HepG2 (cell line): ENCODE measurements at regions of chr20 and their contacts with region 1.

Region 1: GRCh38 chr20:18428490-18429173 is 38.2 kb downstream of the DZANK1 start:
- DNase-seq: peak; percentile 64
- ATAC-seq: peak; percentile 75
- H3K4me3 ChIP-seq: no peak overlapping the region
- H3K27ac ChIP-seq: no peak overlapping the region
- H3K4me1 ChIP-seq: peaks cover 10% of the 10 kb centered on the region
- H3K27me3 ChIP-seq: no peaks in the 10 kb centered on the region
- CTCF ChIP-seq: no peak
- EP300 ChIP-seq: no peak
- POLR2A ChIP-seq: no peak
- RAD21 ChIP-seq: no peak

Region 2: GRCh38 chr20:18397030-18397429 is 31.6 kb before region 1 on chr20:
- CTCF ChIA-PET with region 1: no interaction called
- POLR2A ChIA-PET with region 1: no interaction called
- in situ Hi-C with region 1: no loop called
- intact Hi-C with region 1: no loop called
- DNase-seq: no peak
- ATAC-seq: no peak
- H3K4me3 ChIP-seq: no peak overlapping the region
- H3K27ac ChIP-seq: no peak overlapping the region
- H3K4me1 ChIP-seq: no peaks in the 10 kb centered on the region
- H3K27me3 ChIP-seq: no peaks in the 10 kb centered on the region
- CTCF ChIP-seq: no peak
- EP300 ChIP-seq: no peak
- POLR2A ChIP-seq: no peak
- RAD21 ChIP-seq: no peak

Region 3: GRCh38 chr20:18412221-18412901 is 16.3 kb before region 1 on chr20:
- CTCF ChIA-PET with region 1: no interaction called
- POLR2A ChIA-PET with region 1: no interaction called
- in situ Hi-C with region 1: no loop called
- intact Hi-C with region 1: loop called (anchors 1 kb)
- DNase-seq: no peak
- ATAC-seq: no peak
- H3K4me3 ChIP-seq: no peak overlapping the region
- H3K27ac ChIP-seq: no peak overlapping the region
- H3K4me1 ChIP-seq: peaks cover 13% of the 10 kb centered on the region
- H3K27me3 ChIP-seq: no peaks in the 10 kb centered on the region
- CTCF ChIP-seq: no peak
- EP300 ChIP-seq: no peak
- POLR2A ChIP-seq: no peak
- RAD21 ChIP-seq: no peak

Region 4: DNA sequence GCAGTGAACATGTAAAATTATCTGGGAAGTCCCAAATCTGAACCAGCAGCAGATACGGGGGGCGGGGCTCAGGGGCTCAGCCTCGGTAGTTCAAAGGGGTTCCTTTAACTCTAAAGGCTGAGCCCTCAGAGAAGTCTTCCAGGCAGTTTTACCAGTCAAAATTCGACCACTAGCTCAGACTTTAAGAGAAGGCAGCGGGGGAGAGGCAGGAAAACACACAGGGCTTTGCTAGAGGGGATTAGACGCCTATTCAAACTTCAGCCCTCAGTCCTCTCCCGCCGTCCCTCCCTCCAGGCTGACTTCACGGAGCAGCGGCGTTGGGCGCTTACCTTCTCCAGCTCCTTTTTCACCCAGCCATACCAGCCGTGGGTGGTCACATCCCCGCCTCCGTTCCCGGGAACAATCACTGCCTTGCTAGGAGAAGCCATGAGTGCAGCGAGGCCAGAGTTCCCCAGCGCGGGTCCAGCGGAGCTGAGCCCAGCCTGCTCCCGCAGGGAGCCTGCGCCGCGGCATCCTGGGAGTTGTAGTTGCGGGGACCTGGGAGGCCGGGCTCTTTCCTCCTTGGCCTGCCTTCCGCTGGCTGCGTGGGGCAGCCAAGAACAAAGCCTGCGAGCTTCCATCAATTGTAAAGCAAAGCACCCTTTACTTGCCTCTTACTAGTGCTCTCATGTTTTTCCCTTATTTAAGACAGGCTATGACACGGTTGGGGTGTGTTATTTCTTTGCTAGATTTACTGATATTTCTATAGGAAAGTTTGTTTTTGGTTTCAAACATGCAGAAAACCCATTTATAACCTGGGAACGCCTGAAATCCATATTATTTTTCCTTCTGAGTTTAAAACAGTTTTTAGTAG is 68.3 kb after region 1 on chr20 and contains the start of gene RBBP9:
- CTCF ChIA-PET with region 1: no interaction called
- POLR2A ChIA-PET with region 1: no interaction called
- in situ Hi-C with region 1: no loop called
- intact Hi-C with region 1: loop called (anchors 2 kb)
- DNase-seq: peak; percentile 84
- ATAC-seq: peak; percentile 100
- H3K4me3 ChIP-seq: peak within 1 kb of the TSS; percentile 91 to 99 (median 92)
- H3K27ac ChIP-seq: peak within 1 kb of the TSS; percentile 73
- H3K4me1 ChIP-seq: peaks cover 32% of the 10 kb centered on the region
- H3K27me3 ChIP-seq: no peaks in the 10 kb centered on the region; a peak in 1 of 5 replicates
- CTCF ChIP-seq: peak; percentile 29; the same call in 1 of the 2 replicates
- EP300 ChIP-seq: peak; percentile 31 to 35; a peak in 1 of 4 replicates
- POLR2A ChIP-seq: peak; percentile 92 to 97
- RAD21 ChIP-seq: peak; percentile 51; the same call in 1 of the 2 replicates
- total RNA-seq, gene RBBP9: 56.3 and 99.5 TPM in 2 replicates